ENCODE measurements at regions of chr15 and their contacts with region 1.

Region 1: DNA sequence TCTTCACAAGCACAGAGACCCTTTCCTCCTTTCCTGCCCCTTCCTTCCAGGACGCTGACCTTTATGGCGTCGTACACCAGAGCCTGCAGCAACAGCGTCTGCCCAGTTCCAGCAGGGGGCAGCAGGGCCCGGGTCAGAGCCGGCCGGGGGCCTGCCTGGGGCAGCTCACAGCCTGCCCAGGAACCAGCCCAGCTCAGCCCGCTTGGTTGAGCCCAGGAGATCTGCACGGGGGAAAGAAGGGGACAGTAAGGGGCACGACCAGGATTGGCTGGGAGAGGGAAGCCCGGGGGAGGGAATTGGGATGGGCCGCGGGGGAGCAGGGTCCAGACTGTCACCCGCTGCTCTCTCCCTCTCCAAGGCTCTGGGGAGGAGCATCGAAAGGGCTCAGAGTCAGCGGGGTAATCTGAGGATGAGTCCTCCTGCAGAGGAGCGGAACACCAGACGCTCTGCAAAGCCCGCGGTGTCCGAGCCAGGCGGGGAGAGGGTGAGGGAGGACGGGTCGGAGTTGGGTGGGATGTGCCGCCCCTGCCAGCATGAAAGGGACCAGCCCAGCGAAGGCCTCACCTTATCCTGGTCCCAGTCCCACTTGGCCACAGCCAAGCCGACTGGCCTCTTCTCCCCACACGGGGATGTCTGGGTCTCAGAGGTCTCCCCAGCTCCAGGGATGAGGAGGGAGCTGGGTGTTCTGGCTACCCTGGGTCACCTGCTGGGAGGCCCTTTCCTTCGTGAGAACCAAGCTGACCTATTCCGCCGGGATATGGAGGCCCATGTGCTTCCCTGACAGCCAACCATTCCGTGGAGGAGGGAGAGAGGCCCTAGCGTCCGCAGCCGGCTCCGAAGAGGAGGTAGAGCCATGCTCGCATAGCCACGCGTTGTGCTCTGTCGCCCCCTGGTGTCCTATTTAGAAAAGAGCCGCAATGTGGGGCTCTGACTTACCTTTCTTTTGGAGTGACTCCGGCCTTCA is 7.4 kb upstream of the IGDCC3 start:
- DNase-seq: peak; percentile 93
- H3K4me3 ChIP-seq: peak overlapping the region; percentile 18 to 71 (median 42)
- H3K27ac ChIP-seq: peak overlapping the region in 4 of 8 donors; percentile 34 to 77 (median 56)
- H3K4me1 ChIP-seq: peaks cover 0 to 21% (median 17%) of the 10 kb centered on the region in 6 donors
- H3K27me3 ChIP-seq: peaks cover 0 to 42% (median 0%) of the 10 kb centered on the region in 7 donors
- CTCF ChIP-seq: peak; percentile 67 to 93 (median 83)
- POLR2A ChIP-seq: no peak

Region 2: GRCh38 chr15:65318870-65319356 is 66.3 kb before region 1 on chr15:
- intact Hi-C with region 1: loop called (anchors 2 kb)
- DNase-seq: peak; percentile 89
- H3K4me3 ChIP-seq: no peak overlapping the region
- H3K27ac ChIP-seq: no peak overlapping the region
- H3K4me1 ChIP-seq: peaks cover 0 to 3% (median 0%) of the 10 kb centered on the region in 6 donors
- H3K27me3 ChIP-seq: peaks cover 0 to 35% (median 0%) of the 10 kb centered on the region in 7 donors
- CTCF ChIP-seq: peak; percentile 91 to 97 (median 94)
- POLR2A ChIP-seq: no peak